ENCODE measurements at regions of chr3 and their contacts with region 1.

Region 1: GRCh38 chr3:196837819-196838420 is 29.8 kb upstream of the SENP5 start:
- DNase-seq: peak; percentile 56 to 88
- ATAC-seq: peak; percentile 87 to 97 (median 96)
- H3K4me3 ChIP-seq: no peak overlapping the region
- H3K4me3 Mint-ChIP-seq: no peak overlapping the region
- H3K27ac ChIP-seq: no peak overlapping the region
- H3K27ac Mint-ChIP-seq: no peak overlapping the region
- H3K4me1 ChIP-seq: no peaks in the 10 kb centered on the region
- H3K4me1 Mint-ChIP-seq: no peaks in the 10 kb centered on the region
- H3K27me3 ChIP-seq: no peaks in the 10 kb centered on the region
- H3K27me3 Mint-ChIP-seq: peaks cover 0 to 2% of the 10 kb centered on the region in 2 donors
- CTCF ChIP-seq: peak; percentile 86

Region 2: DNA sequence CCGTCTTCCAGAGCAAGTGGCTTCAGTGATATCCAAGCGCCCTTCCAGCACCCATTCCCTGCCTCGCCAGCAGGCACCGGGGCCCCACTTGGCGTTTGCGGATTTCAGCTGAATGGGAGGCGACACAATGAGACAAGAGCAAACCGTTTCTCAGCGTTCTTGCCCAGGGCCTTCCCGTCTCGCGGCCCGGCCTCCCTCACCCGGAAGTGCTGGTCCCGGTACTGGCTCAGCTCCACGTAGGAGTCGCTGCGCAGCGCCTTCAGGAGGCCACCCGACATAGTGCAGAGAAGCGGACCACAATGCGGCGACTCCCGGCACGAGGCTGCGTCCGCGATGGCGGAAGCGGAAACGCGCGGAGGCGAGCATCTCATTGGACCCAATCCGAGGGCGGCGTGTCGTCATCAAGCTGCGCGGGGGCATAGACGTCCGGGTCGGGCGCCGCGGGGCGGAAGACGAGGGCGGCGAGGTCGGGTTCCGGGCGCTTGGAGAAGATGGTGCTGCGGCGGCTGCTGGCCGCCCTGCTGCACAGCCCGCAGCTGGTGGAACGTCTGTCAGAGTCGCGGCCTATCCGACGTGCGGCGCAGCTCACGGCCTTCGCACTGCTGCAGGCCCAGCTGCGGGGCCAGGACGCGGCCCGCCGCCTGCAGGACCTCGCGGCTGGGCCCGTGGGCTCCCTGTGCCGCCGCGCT is 104.5 kb after region 1 on chr3 and contains the start of gene NCBP2:
- intact Hi-C with region 1: loop called (anchors 1 kb)
- DNase-seq: peak; percentile 100
- ATAC-seq: peak; percentile 91 to 97 (median 94)
- H3K4me3 ChIP-seq: peak within 1 kb of the TSS; percentile 80
- H3K4me3 Mint-ChIP-seq: peak within 1 kb of the TSS; percentile 98
- H3K27ac ChIP-seq: peak within 1 kb of the TSS; percentile 89
- H3K27ac Mint-ChIP-seq: peak within 1 kb of the TSS; percentile 90 to 98
- H3K4me1 ChIP-seq: peaks cover 25% of the 10 kb centered on the region
- H3K4me1 Mint-ChIP-seq: peaks cover 36 to 39% of the 10 kb centered on the region in 2 donors
- H3K27me3 ChIP-seq: no peaks in the 10 kb centered on the region
- H3K27me3 Mint-ChIP-seq: no peaks in the 10 kb centered on the region
- CTCF ChIP-seq: peak; percentile 60
- total RNA-seq, gene NCBP2: 32.3 to 44.1 (median 37.5) TPM

Region 3: DNA sequence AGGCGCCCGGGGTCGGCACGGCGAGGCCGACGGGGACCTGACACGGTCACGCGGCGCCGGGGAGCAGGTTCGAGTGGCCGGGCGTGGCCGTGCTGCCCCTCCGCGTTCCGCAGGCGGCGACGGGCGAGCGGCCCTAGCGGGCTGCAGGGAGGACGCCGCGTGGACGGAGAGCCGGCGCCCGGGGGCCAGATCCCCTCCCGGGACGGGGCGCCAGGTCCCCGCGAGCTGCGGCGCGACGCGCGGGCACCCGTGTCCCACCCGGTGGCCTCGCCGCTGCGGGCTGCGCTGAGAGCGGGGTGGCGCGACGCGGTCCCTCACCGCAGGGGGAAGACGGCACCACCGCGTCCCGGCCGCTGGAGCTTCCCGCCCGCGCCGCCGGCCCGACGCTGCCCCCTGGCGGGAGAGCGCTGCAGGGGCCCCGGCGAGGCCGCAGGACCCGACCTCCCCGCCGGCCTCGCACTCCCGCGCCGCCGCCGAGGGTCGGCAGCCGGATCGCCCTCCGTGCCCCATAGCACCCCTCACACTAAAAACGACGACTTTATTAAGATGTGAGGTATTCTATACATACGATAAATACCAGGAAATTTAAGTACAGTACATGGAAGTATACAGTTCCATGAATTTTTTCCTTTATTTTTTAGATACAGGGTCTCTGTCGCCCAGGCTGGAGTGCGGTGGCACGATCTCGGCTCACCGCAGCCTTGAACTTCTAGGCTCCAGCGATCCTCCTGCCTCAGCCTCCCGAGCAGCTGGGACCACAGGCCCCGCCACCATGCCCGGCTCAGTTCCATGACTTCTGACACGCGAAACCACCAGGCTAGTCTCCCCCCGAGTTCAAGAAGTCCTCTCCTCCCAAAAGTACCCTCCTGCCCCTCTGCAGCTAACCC is 132.0 kb after region 1 on chr3:
- intact Hi-C with region 1: loop called (anchors 1 kb)
- DNase-seq: peak; percentile 69 to 85
- ATAC-seq: peak; percentile 80 to 84 (median 82)
- H3K4me3 ChIP-seq: no peak overlapping the region
- H3K4me3 Mint-ChIP-seq: peak overlapping the region; percentile 82
- H3K27ac ChIP-seq: no peak overlapping the region
- H3K27ac Mint-ChIP-seq: peak overlapping the region in 1 of 2 donors; percentile 35
- H3K4me1 ChIP-seq: peaks cover 14% of the 10 kb centered on the region
- H3K4me1 Mint-ChIP-seq: peaks cover 5 to 25% of the 10 kb centered on the region in 2 donors
- H3K27me3 ChIP-seq: no peaks in the 10 kb centered on the region
- H3K27me3 Mint-ChIP-seq: no peaks in the 10 kb centered on the region
- CTCF ChIP-seq: peak; percentile 93

Region 4: GRCh38 chr3:197029511-197030167 is 191.7 kb after region 1 on chr3 and contains the start of gene MELTF:
- intact Hi-C with region 1: loop called (anchors 5 kb)
- DNase-seq: peak; percentile 78 to 81
- ATAC-seq: peak; percentile 90 to 93 (median 91)
- H3K4me3 ChIP-seq: peak within 1 kb of the TSS; percentile 32
- H3K4me3 Mint-ChIP-seq: peak within 1 kb of the TSS; percentile 74
- H3K27ac ChIP-seq: no peak within 1 kb of the TSS
- H3K27ac Mint-ChIP-seq: peak within 1 kb of the TSS in 1 of 2 donors; percentile 63
- H3K4me1 ChIP-seq: peaks cover 24% of the 10 kb centered on the region
- H3K4me1 Mint-ChIP-seq: peaks cover 2 to 27% of the 10 kb centered on the region in 2 donors
- H3K27me3 ChIP-seq: no peaks in the 10 kb centered on the region
- H3K27me3 Mint-ChIP-seq: peaks cover 1 to 2% of the 10 kb centered on the region in 2 donors
- CTCF ChIP-seq: peak; percentile 86
- total RNA-seq, gene MELTF: 2.4 to 4.3 (median 4.0) TPM

Region 5: GRCh38 chr3:197186887-197187588 is 349.1 kb after region 1 on chr3:
- intact Hi-C with region 1: loop called (anchors 5 kb)
- DNase-seq: peak in 1 of 2 donors; percentile 76
- ATAC-seq: peak; percentile 79 to 87 (median 83)
- H3K4me3 ChIP-seq: no peak overlapping the region
- H3K4me3 Mint-ChIP-seq: no peak overlapping the region
- H3K27ac ChIP-seq: no peak overlapping the region
- H3K27ac Mint-ChIP-seq: no peak overlapping the region
- H3K4me1 ChIP-seq: no peaks in the 10 kb centered on the region
- H3K4me1 Mint-ChIP-seq: peaks cover 0 to 13% of the 10 kb centered on the region in 2 donors
- H3K27me3 ChIP-seq: no peaks in the 10 kb centered on the region
- H3K27me3 Mint-ChIP-seq: no peaks in the 10 kb centered on the region
- CTCF ChIP-seq: peak; percentile 74

Measured in natural killer cell (primary cell).